H1 (cell line): ENCODE measurements at regions of chr17 and their contacts with region 1.

Region 1: GRCh38 chr17:74368092-74369081 is 1.1 kb downstream of the GPR142 start:
- DNase-seq: peak in 1 of 2 experiments; percentile 90
- H3K4me3 ChIP-seq: no peak overlapping the region
- H3K27ac ChIP-seq: no peak overlapping the region
- H3K4me1 ChIP-seq: peaks cover 0 to 12% (median 7%) of the 10 kb centered on the region in 4 experiments; a peak in 6 of 7 replicates
- H3K27me3 ChIP-seq: no peaks in the 10 kb centered on the region; a peak in 3 of 7 replicates
- CTCF ChIP-seq: peak; percentile 89 to 96 (median 89)
- EP300 ChIP-seq: no peak
- POLR2A ChIP-seq: no peak
- RAD21 ChIP-seq: peak; percentile 75 to 81

Region 2: GRCh38 chr17:74212913-74213791 is 155.2 kb before region 1 on chr17 and contains the start of gene TTYH2:
- CTCF ChIA-PET with region 1: no interaction called
- POLR2A ChIA-PET with region 1: no interaction called
- DNase-seq: peak in 1 of 2 experiments; percentile 81
- H3K4me3 ChIP-seq: peak within 1 kb of the TSS; percentile 56 to 64 (median 62)
- H3K27ac ChIP-seq: no peak within 1 kb of the TSS
- H3K4me1 ChIP-seq: peaks cover 8 to 21% (median 20%) of the 10 kb centered on the region in 4 experiments
- H3K27me3 ChIP-seq: peaks cover 2 to 20% (median 11%) of the 10 kb centered on the region in 4 experiments; a peak in 6 of 7 replicates
- CTCF ChIP-seq: peak; percentile 28 to 39 (median 38); a peak in 3 of 4 replicates
- EP300 ChIP-seq: 0 out of 3 replicates have a peak, but pooled peaks of 1 of the 2 experiments have one; percentile 35
- POLR2A ChIP-seq: no peak
- RAD21 ChIP-seq: peak in 1 of 2 experiments; percentile 15; a peak in 1 of 4 replicates
- total RNA-seq, gene TTYH2: 3.2 and 3.7 TPM in 2 replicates

Region 3: GRCh38 chr17:74305865-74306654 is 62.3 kb before region 1 on chr17:
- CTCF ChIA-PET with region 1: interaction called, 64 read pairs
- POLR2A ChIA-PET with region 1: no interaction called
- DNase-seq: no peak
- H3K4me3 ChIP-seq: no peak overlapping the region
- H3K27ac ChIP-seq: no peak overlapping the region
- H3K4me1 ChIP-seq: no peaks in the 10 kb centered on the region
- H3K27me3 ChIP-seq: no peaks in the 10 kb centered on the region
- CTCF ChIP-seq: peak in 2 of 3 experiments; percentile 43 to 57; a peak in 3 of 4 replicates
- EP300 ChIP-seq: no peak
- POLR2A ChIP-seq: no peak
- RAD21 ChIP-seq: peak; percentile 62 to 74

Region 4: DNA sequence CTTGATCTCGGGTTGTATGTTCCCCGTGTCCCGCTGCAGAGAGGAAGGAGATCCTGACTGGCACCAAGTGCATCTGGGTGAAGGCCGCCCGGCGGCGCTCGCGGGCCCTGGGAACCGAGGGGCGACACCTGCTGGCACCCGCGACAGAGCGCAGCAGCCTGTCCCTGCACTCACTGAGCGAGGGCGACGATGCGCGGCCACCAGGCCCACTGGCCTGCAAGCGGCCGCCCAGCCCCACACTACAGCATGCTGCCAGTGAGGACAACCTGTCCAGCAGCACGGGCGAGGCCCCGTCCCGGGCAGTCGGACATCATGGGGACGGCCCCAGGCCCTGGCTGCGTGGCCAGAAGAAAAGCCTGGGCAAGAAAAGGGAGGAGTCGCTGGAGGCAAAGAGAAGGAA is 14.3 kb before region 1 on chr17:
- CTCF ChIA-PET with region 1: interaction called, 83 read pairs
- POLR2A ChIA-PET with region 1: interaction called, 3 read pairs
- DNase-seq: peak in 1 of 2 experiments; percentile 92
- H3K4me3 ChIP-seq: no peak overlapping the region; a peak in 2 of 8 replicates
- H3K27ac ChIP-seq: no peak overlapping the region
- H3K4me1 ChIP-seq: peaks cover 0 to 8% (median 6%) of the 10 kb centered on the region in 4 experiments; a peak in 5 of 7 replicates
- H3K27me3 ChIP-seq: peaks cover 16 to 49% (median 33%) of the 10 kb centered on the region in 4 experiments
- CTCF ChIP-seq: peak; percentile 99 to 100 (median 100)
- EP300 ChIP-seq: no peak
- POLR2A ChIP-seq: no peak
- RAD21 ChIP-seq: peak; percentile 66 to 79

Region 5: DNA sequence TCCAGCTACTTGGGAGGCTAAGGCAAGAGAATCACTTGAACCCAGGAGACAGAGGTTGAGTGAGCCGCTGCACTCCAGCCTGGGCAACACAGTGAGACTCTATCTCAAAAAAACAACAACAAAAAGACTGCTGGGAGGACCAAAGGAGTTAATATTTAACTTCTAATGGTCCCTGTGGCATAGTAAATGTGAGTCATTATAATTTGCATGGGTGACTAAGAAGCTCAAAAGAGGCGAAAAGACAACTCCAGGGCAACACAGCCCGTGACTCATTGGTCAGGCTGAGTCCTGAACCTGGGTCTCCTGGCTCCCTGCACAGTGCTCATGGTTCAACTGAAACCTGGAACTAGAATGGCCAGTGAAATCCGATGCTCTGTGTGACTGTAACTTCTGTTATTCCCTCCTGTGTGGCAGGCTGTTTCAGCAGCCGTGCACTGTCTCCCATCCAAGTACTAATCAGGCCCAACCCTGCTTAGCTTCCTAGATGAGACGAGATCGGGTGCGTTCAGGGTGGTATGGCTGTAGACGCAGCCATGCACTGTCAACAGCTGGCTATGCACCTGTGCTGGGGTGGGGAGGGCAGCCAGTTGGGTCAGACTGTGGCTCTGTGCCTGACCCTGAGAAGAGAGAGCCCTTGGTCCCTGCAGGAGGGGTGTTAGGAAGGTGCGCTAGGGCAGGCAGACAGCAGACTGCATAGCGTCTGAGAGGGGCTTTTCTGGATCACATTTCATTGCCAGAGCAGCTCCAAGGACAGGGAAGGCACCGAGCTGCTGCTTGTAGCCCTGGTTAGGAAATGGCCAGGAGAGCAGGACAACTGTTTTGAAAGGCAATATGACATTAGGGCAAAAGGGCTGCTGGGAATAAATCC is 49.0 kb after region 1 on chr17:
- CTCF ChIA-PET with region 1: interaction called, 11 read pairs
- POLR2A ChIA-PET with region 1: no interaction called
- DNase-seq: no peak
- H3K4me3 ChIP-seq: no peak overlapping the region
- H3K27ac ChIP-seq: no peak overlapping the region
- H3K4me1 ChIP-seq: peaks cover 0 to 4% (median 0%) of the 10 kb centered on the region in 4 experiments; a peak in 2 of 7 replicates
- H3K27me3 ChIP-seq: no peaks in the 10 kb centered on the region
- CTCF ChIP-seq: no peak
- EP300 ChIP-seq: no peak
- POLR2A ChIP-seq: no peak
- RAD21 ChIP-seq: no peak

Region 6: GRCh38 chr17:74485022-74485743 is 116.8 kb after region 1 on chr17:
- CTCF ChIA-PET with region 1: interaction called, 60 read pairs
- POLR2A ChIA-PET with region 1: no interaction called
- DNase-seq: no peak
- H3K4me3 ChIP-seq: no peak overlapping the region
- H3K27ac ChIP-seq: no peak overlapping the region
- H3K4me1 ChIP-seq: no peaks in the 10 kb centered on the region
- H3K27me3 ChIP-seq: no peaks in the 10 kb centered on the region
- CTCF ChIP-seq: no peak
- EP300 ChIP-seq: no peak
- POLR2A ChIP-seq: no peak
- RAD21 ChIP-seq: no peak